Heart right ventricle (tissue), 16 donors: ENCODE measurements at regions of chr6 and their contacts with region 1.

Region 1: GRCh38 chr6:25942561-25943147 is 12.2 kb upstream of the SLC17A2 start:
- DNase-seq: no peak
- ATAC-seq: peak in 1 of 8 donors; percentile 58
- H3K4me3 ChIP-seq: no peak overlapping the region
- H3K27ac ChIP-seq: no peak overlapping the region
- H3K4me1 ChIP-seq: no peaks in the 10 kb centered on the region
- H3K27me3 ChIP-seq: no peaks in the 10 kb centered on the region
- CTCF ChIP-seq: peak in 7 of 9 donors; percentile 31 to 66 (median 59)

Region 2: GRCh38 chr6:25717866-25718740 is 224.6 kb before region 1 on chr6:
- intact Hi-C with region 1: loop called in 1 of 10 experiments (anchors 10 kb)
- DNase-seq: no peak
- ATAC-seq: no peak
- H3K4me3 ChIP-seq: no peak overlapping the region
- H3K27ac ChIP-seq: no peak overlapping the region
- H3K4me1 ChIP-seq: no peaks in the 10 kb centered on the region
- H3K27me3 ChIP-seq: peaks cover 0 to 24% (median 0%) of the 10 kb centered on the region in 7 donors
- CTCF ChIP-seq: peak in 8 of 9 donors; percentile 13 to 67 (median 54)

Region 3: GRCh38 chr6:26130254-26131249 is 187.9 kb after region 1 on chr6:
- intact Hi-C with region 1: no loop called
- DNase-seq: no peak
- ATAC-seq: no peak
- H3K4me3 ChIP-seq: no peak overlapping the region
- H3K27ac ChIP-seq: no peak overlapping the region
- H3K4me1 ChIP-seq: peaks cover 0 to 78% (median 34%) of the 10 kb centered on the region in 9 donors
- H3K27me3 ChIP-seq: no peaks in the 10 kb centered on the region
- CTCF ChIP-seq: no peak